ENCODE measurements at regions of chr5 and their contacts with region 1.

Region 1: GRCh38 chr5:29719171-29719570 is 1474.3 kb upstream of the CDH6 start:
- DNase-seq: no peak
- ATAC-seq: no peak
- H3K4me3 ChIP-seq: no peak overlapping the region
- H3K27ac ChIP-seq: no peak overlapping the region
- H3K4me1 ChIP-seq: no peaks in the 10 kb centered on the region
- H3K27me3 ChIP-seq: no peaks in the 10 kb centered on the region
- CTCF ChIP-seq: no peak
- POLR2A ChIP-seq: no peak
- RAD21 ChIP-seq: no peak

Region 2: GRCh38 chr5:27708579-27708978 is 2010.6 kb before region 1 on chr5:
- CTCF ChIA-PET with region 1: no interaction called
- POLR2A ChIA-PET with region 1: no interaction called
- dilution Hi-C with region 1: no loop called
- in situ Hi-C with region 1: no loop called
- intact Hi-C with region 1: no loop called
- DNase-seq: no peak
- ATAC-seq: no peak
- H3K4me3 ChIP-seq: no peak overlapping the region
- H3K27ac ChIP-seq: no peak overlapping the region
- H3K4me1 ChIP-seq: no peaks in the 10 kb centered on the region
- H3K27me3 ChIP-seq: no peaks in the 10 kb centered on the region
- CTCF ChIP-seq: no peak
- POLR2A ChIP-seq: no peak
- RAD21 ChIP-seq: no peak

Region 3: GRCh38 chr5:29642601-29643000 is 76.6 kb before region 1 on chr5:
- CTCF ChIA-PET with region 1: no interaction called
- POLR2A ChIA-PET with region 1: no interaction called
- dilution Hi-C with region 1: no loop called
- in situ Hi-C with region 1: loop called (anchors 10 kb)
- intact Hi-C with region 1: no loop called
- DNase-seq: no peak
- ATAC-seq: no peak
- H3K4me3 ChIP-seq: no peak overlapping the region
- H3K27ac ChIP-seq: no peak overlapping the region
- H3K4me1 ChIP-seq: no peaks in the 10 kb centered on the region
- H3K27me3 ChIP-seq: no peaks in the 10 kb centered on the region
- CTCF ChIP-seq: no peak
- POLR2A ChIP-seq: no peak
- RAD21 ChIP-seq: no peak

Region 4: GRCh38 chr5:29833394-29833793 is 114.2 kb after region 1 on chr5:
- CTCF ChIA-PET with region 1: no interaction called
- POLR2A ChIA-PET with region 1: no interaction called
- dilution Hi-C with region 1: no loop called
- in situ Hi-C with region 1: no loop called
- intact Hi-C with region 1: no loop called
- DNase-seq: no peak
- ATAC-seq: no peak
- H3K4me3 ChIP-seq: no peak overlapping the region
- H3K27ac ChIP-seq: no peak overlapping the region
- H3K4me1 ChIP-seq: no peaks in the 10 kb centered on the region
- H3K27me3 ChIP-seq: no peaks in the 10 kb centered on the region
- CTCF ChIP-seq: no peak
- POLR2A ChIP-seq: no peak
- RAD21 ChIP-seq: no peak